Tibial artery (tissue), 4 donors: ENCODE measurements at regions of chr9 and their contacts with region 1.

Region 1: DNA sequence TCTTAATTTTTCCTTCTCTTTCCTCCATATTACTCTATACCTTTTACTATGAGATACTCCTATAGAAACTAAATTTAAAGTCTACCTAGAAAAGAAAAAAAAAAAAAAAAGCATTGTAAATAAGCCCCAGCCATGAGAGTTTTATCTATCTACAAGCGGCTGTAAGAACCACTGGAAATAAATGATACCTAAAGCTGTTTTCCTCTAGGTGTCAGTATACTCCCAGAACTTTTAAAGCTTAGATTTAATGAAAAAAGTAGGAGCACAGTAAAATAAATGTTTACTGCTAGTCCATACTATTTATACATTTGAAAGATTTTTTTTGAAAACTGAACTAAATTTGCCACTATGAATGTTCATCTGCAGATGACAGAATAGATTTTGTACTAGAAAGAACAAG is 26.2 kb downstream of the TYRP1 start:
- DNase-seq: no peak
- H3K4me3 ChIP-seq: no peak overlapping the region
- H3K27ac ChIP-seq: no peak overlapping the region
- H3K4me1 ChIP-seq: no peaks in the 10 kb centered on the region
- H3K27me3 ChIP-seq: no peaks in the 10 kb centered on the region
- CTCF ChIP-seq: peak; percentile 55 to 57

Region 2: DNA sequence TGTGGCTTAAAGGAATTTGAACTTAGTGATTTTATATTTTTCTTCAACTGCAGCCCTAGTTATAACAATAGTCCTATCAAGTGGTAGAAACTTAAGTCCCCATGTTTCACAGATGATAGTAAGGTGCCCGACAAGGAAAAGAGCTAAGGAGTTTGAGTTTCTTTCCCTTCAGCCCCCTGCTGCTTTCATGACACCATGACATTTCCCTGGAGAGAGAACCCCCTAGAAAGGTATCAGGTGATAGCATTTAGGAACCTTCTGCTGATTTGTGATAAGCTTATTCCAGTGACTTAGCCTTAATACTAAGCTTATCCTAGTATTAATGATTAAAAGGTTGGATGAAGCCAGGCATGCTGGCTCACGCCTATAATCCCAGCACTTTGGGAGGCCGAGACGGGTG is 650.1 kb before region 1 on chr9:
- intact Hi-C with region 1: no loop called
- DNase-seq: no peak
- H3K4me3 ChIP-seq: no peak overlapping the region
- H3K27ac ChIP-seq: no peak overlapping the region
- H3K4me1 ChIP-seq: no peaks in the 10 kb centered on the region
- H3K27me3 ChIP-seq: no peaks in the 10 kb centered on the region
- CTCF ChIP-seq: no peak

Region 3: GRCh38 chr9:12612211-12612770 is 107.1 kb before region 1 on chr9:
- intact Hi-C with region 1: no loop called
- DNase-seq: no peak
- H3K4me3 ChIP-seq: no peak overlapping the region
- H3K27ac ChIP-seq: no peak overlapping the region
- H3K4me1 ChIP-seq: no peaks in the 10 kb centered on the region
- H3K27me3 ChIP-seq: no peaks in the 10 kb centered on the region
- CTCF ChIP-seq: no peak

Region 4: DNA sequence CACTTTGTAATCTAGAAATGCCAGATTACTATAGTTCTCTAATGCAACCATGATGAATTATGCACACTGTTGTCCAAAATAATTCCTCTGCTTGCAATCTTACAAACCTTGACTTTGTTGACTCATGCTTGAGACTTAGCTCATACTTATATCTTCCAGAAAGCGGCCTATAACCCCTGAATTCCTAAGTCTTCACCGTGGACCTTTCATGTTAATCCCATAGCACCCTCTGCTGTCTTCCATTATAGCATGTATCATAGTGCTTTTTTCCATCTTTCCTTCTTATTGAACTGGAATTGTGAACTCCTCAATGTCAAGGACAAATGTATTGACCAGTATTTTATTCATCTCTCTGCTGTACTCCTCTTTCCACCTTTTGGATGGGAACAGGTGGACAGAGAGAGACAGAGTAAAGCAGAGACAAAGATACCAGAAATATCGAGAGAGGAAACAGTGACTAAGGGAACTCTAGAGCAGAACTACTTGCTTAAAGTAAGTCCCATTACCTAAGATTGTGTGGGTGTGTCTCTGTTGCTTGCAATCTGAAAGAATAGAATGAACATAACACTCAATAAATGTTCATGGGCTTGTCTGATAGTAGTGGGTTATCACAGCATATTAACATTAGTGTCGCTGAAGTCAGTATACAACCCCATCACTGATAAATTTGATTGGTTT is 165.4 kb after region 1 on chr9:
- intact Hi-C with region 1: loop called (anchors 5 kb)
- DNase-seq: no peak
- H3K4me3 ChIP-seq: no peak overlapping the region
- H3K27ac ChIP-seq: no peak overlapping the region
- H3K4me1 ChIP-seq: peaks cover 0 to 34% (median 10%) of the 10 kb centered on the region in 4 donors
- H3K27me3 ChIP-seq: no peaks in the 10 kb centered on the region
- CTCF ChIP-seq: peak; percentile 60 to 65

Region 5: GRCh38 chr9:13090628-13091027 is 371.2 kb after region 1 on chr9:
- intact Hi-C with region 1: loop called (anchors 5 kb)
- DNase-seq: no peak
- H3K4me3 ChIP-seq: peak overlapping the region; percentile 12 to 22
- H3K27ac ChIP-seq: peak overlapping the region; percentile 61 to 70
- H3K4me1 ChIP-seq: peaks cover 0 to 34% (median 11%) of the 10 kb centered on the region in 4 donors
- H3K27me3 ChIP-seq: no peaks in the 10 kb centered on the region
- CTCF ChIP-seq: no peak

Region 6: GRCh38 chr9:13213337-13213736 is 493.9 kb after region 1 on chr9:
- intact Hi-C with region 1: no loop called
- DNase-seq: no peak
- H3K4me3 ChIP-seq: no peak overlapping the region
- H3K27ac ChIP-seq: no peak overlapping the region
- H3K4me1 ChIP-seq: no peaks in the 10 kb centered on the region
- H3K27me3 ChIP-seq: no peaks in the 10 kb centered on the region
- CTCF ChIP-seq: peak; percentile 36 to 51